ENCODE measurements at regions of chr19 and their contacts with region 1.

Region 1: DNA sequence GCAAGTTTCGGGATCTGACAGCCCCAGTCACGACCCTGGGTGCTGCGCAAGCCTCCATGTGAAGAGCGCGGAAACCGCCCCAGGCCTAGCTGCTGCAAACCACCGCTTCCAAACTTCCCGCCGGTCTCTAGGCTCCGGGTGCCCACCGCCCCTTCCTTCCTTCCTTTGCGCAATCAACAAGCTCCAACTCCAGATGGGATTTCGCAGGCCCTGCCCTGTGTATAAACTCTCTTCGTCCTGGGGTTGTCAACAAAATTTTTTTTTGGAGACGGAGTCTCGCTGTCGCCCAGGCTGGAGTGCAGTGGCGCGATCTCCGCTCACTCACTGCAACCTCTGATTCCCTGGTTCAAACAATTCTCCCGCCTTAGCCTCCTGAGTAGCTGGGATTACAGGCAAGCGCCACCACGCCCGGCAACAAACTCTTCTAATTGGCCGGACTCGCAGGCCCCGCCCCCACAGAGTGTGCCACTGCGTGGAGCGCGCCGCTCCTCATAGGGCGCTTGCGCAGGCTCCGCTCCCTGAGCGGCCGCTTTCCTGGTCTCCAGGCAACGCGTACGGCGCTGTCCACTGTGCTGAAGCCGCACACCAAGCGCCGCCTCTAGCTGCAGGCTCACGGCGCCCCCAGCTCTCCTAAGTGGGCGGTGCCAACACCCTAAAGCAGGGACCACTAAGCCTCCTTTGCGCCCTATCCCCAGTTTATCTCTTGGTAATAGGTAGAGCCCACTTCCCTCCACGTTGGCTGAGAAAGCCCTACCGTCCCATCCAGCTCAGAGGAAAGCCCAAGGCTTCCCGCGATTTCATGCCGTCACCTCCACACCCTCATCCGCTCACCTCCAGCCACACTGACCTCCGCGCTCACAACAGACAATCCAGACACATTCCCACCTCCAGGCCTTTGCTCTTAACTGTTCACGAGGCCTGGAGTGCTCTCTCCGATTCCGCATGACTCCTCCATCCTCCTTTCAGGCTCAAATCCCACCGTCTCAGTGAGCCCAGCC is 5.5 kb upstream of the QTRT1 start:
- DNase-seq: peak; percentile 93
- ATAC-seq: peak; percentile 99
- H3K4me3 Mint-ChIP-seq: peak overlapping the region; percentile 62
- H3K27ac Mint-ChIP-seq: no peak overlapping the region
- H3K4me1 Mint-ChIP-seq: peaks cover 17% of the 10 kb centered on the region
- H3K27me3 Mint-ChIP-seq: peaks cover 4% of the 10 kb centered on the region
- CTCF ChIP-seq: no peak

Region 2: DNA sequence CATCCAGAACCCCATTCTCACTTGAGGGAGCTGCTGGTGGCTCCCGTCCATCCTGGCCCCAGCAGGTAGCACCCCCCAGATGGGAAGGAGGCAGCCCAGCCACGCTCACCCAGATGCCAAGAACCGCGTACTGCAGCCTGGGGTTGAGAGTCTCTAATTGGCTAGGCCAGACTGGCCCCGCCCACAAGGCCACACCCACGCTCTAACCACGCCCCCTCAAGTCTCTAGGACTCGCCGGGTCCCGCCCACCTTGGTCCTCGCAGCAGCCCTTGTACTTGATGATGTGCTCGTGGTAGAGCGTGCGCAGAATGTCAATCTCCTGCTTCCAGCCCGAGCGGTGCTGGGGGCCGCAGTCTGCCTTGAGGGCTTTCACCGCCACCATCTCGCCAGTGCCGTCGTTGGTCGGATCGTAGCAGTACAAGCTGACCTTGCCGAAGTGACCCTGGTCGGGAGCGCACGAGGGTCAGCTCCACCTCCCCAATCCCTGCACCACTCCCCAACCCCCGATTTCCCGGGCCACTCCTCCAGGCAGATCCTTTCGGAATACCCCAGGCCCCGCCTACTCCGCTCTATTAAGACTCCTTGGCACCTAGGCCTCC is 341.8 kb before region 1 on chr19:
- CTCF ChIA-PET with region 1: no interaction called
- POLR2A ChIA-PET with region 1: no interaction called
- intact Hi-C with region 1: no loop called
- DNase-seq: peak; percentile 71
- ATAC-seq: peak; percentile 80
- H3K4me3 Mint-ChIP-seq: no peak overlapping the region
- H3K27ac Mint-ChIP-seq: no peak overlapping the region
- H3K4me1 Mint-ChIP-seq: no peaks in the 10 kb centered on the region
- H3K27me3 Mint-ChIP-seq: no peaks in the 10 kb centered on the region
- CTCF ChIP-seq: no peak

Region 3: GRCh38 chr19:10543420-10544241 is 152.1 kb before region 1 on chr19 and contains the start of gene ATG4D:
- CTCF ChIA-PET with region 1: interaction called, 13 read pairs
- POLR2A ChIA-PET with region 1: no interaction called
- intact Hi-C with region 1: no loop called
- DNase-seq: peak; percentile 80
- ATAC-seq: peak; percentile 84
- H3K4me3 Mint-ChIP-seq: peak within 1 kb of the TSS; percentile 81
- H3K27ac Mint-ChIP-seq: peak within 1 kb of the TSS; percentile 79
- H3K4me1 Mint-ChIP-seq: peaks cover 9% of the 10 kb centered on the region
- H3K27me3 Mint-ChIP-seq: peaks cover 13% of the 10 kb centered on the region
- CTCF ChIP-seq: no peak
- total RNA-seq, gene ATG4D: 21.7 to 22.5 TPM

Region 4: GRCh38 chr19:10574462-10574861 is 121.2 kb before region 1 on chr19:
- CTCF ChIA-PET with region 1: interaction called, 175 read pairs
- POLR2A ChIA-PET with region 1: interaction called, 3 read pairs
- intact Hi-C with region 1: no loop called
- DNase-seq: no peak
- ATAC-seq: no peak
- H3K4me3 Mint-ChIP-seq: no peak overlapping the region
- H3K27ac Mint-ChIP-seq: no peak overlapping the region
- H3K4me1 Mint-ChIP-seq: peaks cover 7% of the 10 kb centered on the region
- H3K27me3 Mint-ChIP-seq: no peaks in the 10 kb centered on the region
- CTCF ChIP-seq: no peak

Region 5: DNA sequence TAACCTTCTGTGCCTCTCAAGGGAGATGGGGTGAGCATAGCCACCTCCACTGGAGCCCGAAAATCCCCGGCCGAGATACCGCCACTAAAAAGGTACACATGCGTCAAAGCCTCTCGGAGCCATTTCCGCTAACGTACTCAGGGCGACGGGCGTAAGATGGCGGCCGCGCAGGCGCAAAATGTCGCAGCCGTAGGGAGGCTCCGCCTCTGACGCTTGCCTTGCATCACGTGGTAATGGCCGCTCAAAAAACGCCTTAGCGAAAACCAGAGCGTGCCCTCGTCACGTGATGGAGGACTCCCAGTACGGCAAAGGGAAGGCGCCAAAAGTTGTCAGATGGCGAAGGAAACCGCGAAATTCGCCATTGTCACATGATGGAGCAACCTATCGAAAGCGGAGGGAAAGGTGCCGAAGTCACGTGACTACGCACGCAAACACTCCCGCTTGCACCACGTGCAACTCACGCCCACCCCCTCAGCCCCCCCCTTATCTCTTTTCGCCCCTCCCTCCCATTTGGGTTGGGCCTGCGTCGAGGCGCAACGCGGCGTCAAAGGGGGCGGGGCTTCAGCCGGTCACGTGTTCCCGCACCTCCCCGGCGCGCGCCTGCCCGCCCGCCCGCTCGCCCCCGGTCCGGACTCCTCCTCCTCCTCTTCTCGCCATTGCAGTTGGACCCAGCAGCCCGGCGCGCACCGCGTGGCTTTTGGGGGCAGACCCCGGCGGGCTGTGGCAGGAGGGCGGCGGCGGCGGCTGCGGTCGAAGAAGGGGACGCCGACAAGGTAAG is 41.8 kb before region 1 on chr19 and contains the start of gene ILF3:
- CTCF ChIA-PET with region 1: interaction called, 13 read pairs
- POLR2A ChIA-PET with region 1: interaction called, 26 read pairs
- intact Hi-C with region 1: loop called (anchors 5 kb)
- DNase-seq: peak; percentile 100
- ATAC-seq: peak; percentile 84
- H3K4me3 Mint-ChIP-seq: peak within 1 kb of the TSS; percentile 87
- H3K27ac Mint-ChIP-seq: peak within 1 kb of the TSS; percentile 98
- H3K4me1 Mint-ChIP-seq: peaks cover 28% of the 10 kb centered on the region
- H3K27me3 Mint-ChIP-seq: peaks cover 1% of the 10 kb centered on the region
- CTCF ChIP-seq: no peak
- total RNA-seq, gene ILF3: 435 to 450 TPM

Region 6: DNA sequence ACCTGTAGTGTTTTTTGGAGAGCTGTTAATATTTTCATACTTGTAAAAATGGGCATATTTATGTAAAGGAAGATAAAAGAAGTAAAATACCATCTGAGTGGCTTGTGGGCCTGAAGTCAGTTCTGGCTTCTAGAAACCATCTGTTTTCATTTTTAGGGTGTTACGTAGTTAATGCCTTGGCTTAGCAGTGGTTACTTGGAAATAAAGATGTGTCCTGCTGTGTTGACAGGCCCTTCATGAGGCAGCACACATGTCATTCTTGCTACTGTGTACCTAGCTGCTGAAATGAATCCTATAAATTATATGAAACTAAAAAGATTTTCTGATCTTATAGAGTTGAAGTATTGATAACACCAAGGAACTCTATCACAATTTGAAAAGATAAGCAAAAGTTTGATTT is 25.5 kb before region 1 on chr19:
- CTCF ChIA-PET with region 1: interaction called, 11 read pairs
- POLR2A ChIA-PET with region 1: interaction called, 11 read pairs
- intact Hi-C with region 1: no loop called
- DNase-seq: no peak
- ATAC-seq: no peak
- H3K4me3 Mint-ChIP-seq: no peak overlapping the region
- H3K27ac Mint-ChIP-seq: no peak overlapping the region
- H3K4me1 Mint-ChIP-seq: peaks cover 33% of the 10 kb centered on the region
- H3K27me3 Mint-ChIP-seq: no peaks in the 10 kb centered on the region
- CTCF ChIP-seq: no peak

Region 7: GRCh38 chr19:10743866-10744798 is 48.4 kb after region 1 on chr19:
- CTCF ChIA-PET with region 1: no interaction called
- POLR2A ChIA-PET with region 1: no interaction called
- intact Hi-C with region 1: no loop called
- DNase-seq: no peak
- ATAC-seq: no peak
- H3K4me3 Mint-ChIP-seq: no peak overlapping the region
- H3K27ac Mint-ChIP-seq: no peak overlapping the region
- H3K4me1 Mint-ChIP-seq: peaks cover 63% of the 10 kb centered on the region
- H3K27me3 Mint-ChIP-seq: no peaks in the 10 kb centered on the region
- CTCF ChIP-seq: no peak

Measured in activated CD8-positive, alpha-beta T cell treated with anti-CD3 and anti-CD28 coated beads for 36 hours (primary cell).